CD8-positive, alpha-beta memory T cell (primary cell): ENCODE measurements at regions of chr1 and their contacts with region 1.

Region 1: DNA sequence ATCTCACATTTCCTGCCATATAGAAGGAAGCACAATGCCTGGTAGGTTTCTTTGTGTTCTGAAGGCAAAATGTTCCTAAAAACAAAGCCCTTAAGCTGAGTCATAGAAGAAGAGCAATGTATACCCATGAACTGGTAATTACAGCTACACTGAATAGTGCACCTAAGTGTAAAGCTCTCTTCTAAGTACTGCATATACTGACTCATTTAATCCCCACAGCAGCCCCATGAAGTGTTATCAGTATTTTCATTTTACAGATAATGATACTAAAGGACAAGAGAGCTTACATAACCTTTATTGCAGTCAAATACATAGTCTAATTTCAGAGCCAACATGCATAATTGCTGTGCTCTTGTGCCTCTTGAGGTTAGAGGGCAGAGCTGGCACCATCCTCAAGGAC is 239.9 kb downstream of the DPYD start:
- DNase-seq: no peak
- H3K4me3 ChIP-seq: no peak overlapping the region
- H3K4me3 Mint-ChIP-seq: no peak overlapping the region
- H3K27ac ChIP-seq: no peak overlapping the region
- H3K27ac Mint-ChIP-seq: peak overlapping the region in 1 of 8 donors; percentile 89
- H3K4me1 ChIP-seq: no peaks in the 10 kb centered on the region
- H3K4me1 Mint-ChIP-seq: peaks cover 0 to 5% (median 0%) of the 10 kb centered on the region in 3 donors
- H3K27me3 ChIP-seq: no peaks in the 10 kb centered on the region
- H3K27me3 Mint-ChIP-seq: no peaks in the 10 kb centered on the region

Region 2: DNA sequence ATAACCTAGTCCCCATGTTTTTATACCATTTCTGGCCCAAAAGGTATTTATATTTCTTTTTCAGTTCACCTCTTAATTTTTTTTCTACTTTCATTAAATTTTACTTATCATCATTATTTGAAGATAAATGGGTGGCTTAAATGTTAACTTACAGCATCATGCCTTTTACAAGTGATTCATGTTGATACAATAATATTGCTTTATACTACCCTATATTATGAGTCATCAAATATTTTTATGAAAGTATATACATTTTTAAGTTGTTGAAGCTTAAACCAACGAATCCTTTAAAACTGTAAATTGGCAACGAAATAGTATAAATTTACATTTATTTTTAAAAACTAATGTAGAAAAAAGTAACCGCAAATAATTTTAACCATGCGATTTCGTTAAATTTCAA is 32.1 kb after region 1 on chr1:
- CTCF ChIA-PET with region 1: no interaction called
- POLR2A ChIA-PET with region 1: no interaction called
- DNase-seq: no peak
- H3K4me3 ChIP-seq: no peak overlapping the region
- H3K4me3 Mint-ChIP-seq: no peak overlapping the region
- H3K27ac ChIP-seq: no peak overlapping the region
- H3K27ac Mint-ChIP-seq: no peak overlapping the region
- H3K4me1 ChIP-seq: no peaks in the 10 kb centered on the region
- H3K4me1 Mint-ChIP-seq: no peaks in the 10 kb centered on the region
- H3K27me3 ChIP-seq: no peaks in the 10 kb centered on the region
- H3K27me3 Mint-ChIP-seq: no peaks in the 10 kb centered on the region

Region 3: DNA sequence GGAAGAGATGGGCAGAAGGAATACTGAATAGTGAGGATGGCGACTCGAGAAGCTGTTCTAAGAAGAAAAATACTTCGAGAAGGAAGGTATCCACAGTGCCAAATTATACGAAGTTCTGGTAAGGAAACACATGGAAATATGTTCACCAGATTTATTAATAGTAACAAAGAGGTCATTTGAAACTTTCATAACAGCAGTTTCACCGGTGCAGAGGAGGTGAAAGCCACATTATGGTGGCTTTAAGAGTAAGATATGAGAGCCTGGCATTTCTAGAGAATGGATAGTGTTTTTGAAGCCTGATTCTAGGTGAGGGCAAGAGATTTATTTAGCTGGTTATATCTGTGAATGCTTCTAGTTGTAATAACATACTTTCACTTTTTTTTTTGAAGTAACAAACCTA is 183.7 kb after region 1 on chr1:
- CTCF ChIA-PET with region 1: no interaction called
- POLR2A ChIA-PET with region 1: interaction called, 10 read pairs
- DNase-seq: no peak
- H3K4me3 ChIP-seq: no peak overlapping the region
- H3K4me3 Mint-ChIP-seq: no peak overlapping the region
- H3K27ac ChIP-seq: no peak overlapping the region
- H3K27ac Mint-ChIP-seq: peak overlapping the region in 1 of 8 donors; percentile 68
- H3K4me1 ChIP-seq: peaks cover 7% of the 10 kb centered on the region
- H3K4me1 Mint-ChIP-seq: peaks cover 31 to 52% (median 47%) of the 10 kb centered on the region in 3 donors
- H3K27me3 ChIP-seq: no peaks in the 10 kb centered on the region
- H3K27me3 Mint-ChIP-seq: no peaks in the 10 kb centered on the region